A549 (cell line): ENCODE measurements at regions of chr7 and their contacts with region 1.

Region 1: GRCh38 chr7:104923010-104923421 is 91.0 kb upstream of the KMT2E start:
- DNase-seq: peak; percentile 45 to 85
- ATAC-seq: peak; percentile 86 to 94
- H3K4me3 ChIP-seq: no peak overlapping the region
- H3K27ac ChIP-seq: no peak overlapping the region
- H3K4me1 ChIP-seq: no peaks in the 10 kb centered on the region
- CTCF ChIP-seq: peak; percentile 70
- EP300 ChIP-seq: no peak
- POLR2A ChIP-seq: no peak
- RAD21 ChIP-seq: peak; percentile 84 to 94

Region 2: GRCh38 chr7:104895522-104896236 is 27.3 kb before region 1 on chr7:
- CTCF ChIA-PET with region 1: interaction called, 23 read pairs
- POLR2A ChIA-PET with region 1: no interaction called
- DNase-seq: no peak
- ATAC-seq: no peak
- H3K4me3 ChIP-seq: no peak overlapping the region
- H3K27ac ChIP-seq: no peak overlapping the region
- H3K4me1 ChIP-seq: no peaks in the 10 kb centered on the region
- CTCF ChIP-seq: no peak
- EP300 ChIP-seq: no peak
- POLR2A ChIP-seq: no peak
- RAD21 ChIP-seq: no peak

Region 3: GRCh38 chr7:104900525-104901239 is 22.3 kb before region 1 on chr7:
- CTCF ChIA-PET with region 1: interaction called, 23 read pairs
- POLR2A ChIA-PET with region 1: no interaction called
- DNase-seq: no peak
- ATAC-seq: no peak; a peak in 1 of 6 replicates
- H3K4me3 ChIP-seq: no peak overlapping the region
- H3K27ac ChIP-seq: no peak overlapping the region
- H3K4me1 ChIP-seq: no peaks in the 10 kb centered on the region
- CTCF ChIP-seq: no peak
- EP300 ChIP-seq: no peak
- POLR2A ChIP-seq: no peak
- RAD21 ChIP-seq: no peak

Region 4: DNA sequence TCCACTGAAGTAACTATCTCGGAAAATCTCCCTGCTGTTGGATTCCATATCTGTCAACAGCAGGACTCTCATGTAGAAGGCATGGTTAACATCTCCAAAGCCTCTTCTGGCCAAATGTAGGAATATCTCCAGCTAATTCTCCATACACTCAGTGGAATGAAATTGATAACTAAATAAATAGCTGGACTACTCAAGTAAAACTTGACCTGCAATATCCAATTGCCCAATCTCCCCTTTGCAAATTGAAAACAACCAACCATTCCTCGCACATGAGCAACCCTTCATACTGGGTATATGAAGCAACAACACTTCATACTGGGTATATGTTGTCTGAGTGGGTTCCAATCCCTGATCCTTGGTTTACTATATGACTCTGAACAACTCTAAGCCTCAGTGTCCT is 14.4 kb before region 1 on chr7:
- CTCF ChIA-PET with region 1: interaction called, 29 read pairs
- POLR2A ChIA-PET with region 1: no interaction called
- DNase-seq: no peak
- ATAC-seq: no peak
- H3K4me3 ChIP-seq: no peak overlapping the region
- H3K27ac ChIP-seq: no peak overlapping the region
- H3K4me1 ChIP-seq: no peaks in the 10 kb centered on the region
- CTCF ChIP-seq: no peak
- EP300 ChIP-seq: no peak
- POLR2A ChIP-seq: no peak
- RAD21 ChIP-seq: no peak

Region 5: DNA sequence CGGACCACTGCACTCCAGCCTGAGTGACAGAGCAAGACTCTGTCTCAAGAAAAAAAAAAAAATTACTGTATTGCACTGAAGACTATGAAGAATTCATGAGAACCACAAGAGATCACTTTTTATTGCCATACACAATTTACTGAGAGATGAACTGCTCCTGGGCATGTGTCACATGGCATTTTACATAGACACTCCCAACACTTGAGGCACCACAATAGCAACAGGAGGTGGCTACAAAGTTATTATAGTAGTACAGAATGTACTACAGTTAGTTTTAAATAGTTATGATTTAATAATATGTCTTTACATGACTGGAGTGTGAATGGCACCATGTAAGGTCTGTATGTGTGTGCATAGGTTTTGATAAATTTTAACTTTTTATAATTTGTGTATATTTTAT is 161.6 kb after region 1 on chr7:
- CTCF ChIA-PET with region 1: no interaction called
- POLR2A ChIA-PET with region 1: no interaction called
- DNase-seq: no peak
- ATAC-seq: no peak
- H3K4me3 ChIP-seq: no peak overlapping the region
- H3K27ac ChIP-seq: no peak overlapping the region
- H3K4me1 ChIP-seq: no peaks in the 10 kb centered on the region
- CTCF ChIP-seq: no peak
- EP300 ChIP-seq: no peak
- POLR2A ChIP-seq: no peak
- RAD21 ChIP-seq: no peak

Region 6: GRCh38 chr7:105336009-105336408 is 413.0 kb after region 1 on chr7:
- CTCF ChIA-PET with region 1: no interaction called
- POLR2A ChIA-PET with region 1: no interaction called
- DNase-seq: no peak
- ATAC-seq: no peak
- H3K4me3 ChIP-seq: no peak overlapping the region
- H3K27ac ChIP-seq: no peak overlapping the region
- H3K4me1 ChIP-seq: 0 out of 3 replicates have a peak, but pooled peaks cover 3% of the 10 kb centered on the region
- CTCF ChIP-seq: peak; percentile 41; the same call in 2 of the 3 replicates
- EP300 ChIP-seq: no peak
- POLR2A ChIP-seq: no peak
- RAD21 ChIP-seq: peak; percentile 53 to 68

Region 7: DNA sequence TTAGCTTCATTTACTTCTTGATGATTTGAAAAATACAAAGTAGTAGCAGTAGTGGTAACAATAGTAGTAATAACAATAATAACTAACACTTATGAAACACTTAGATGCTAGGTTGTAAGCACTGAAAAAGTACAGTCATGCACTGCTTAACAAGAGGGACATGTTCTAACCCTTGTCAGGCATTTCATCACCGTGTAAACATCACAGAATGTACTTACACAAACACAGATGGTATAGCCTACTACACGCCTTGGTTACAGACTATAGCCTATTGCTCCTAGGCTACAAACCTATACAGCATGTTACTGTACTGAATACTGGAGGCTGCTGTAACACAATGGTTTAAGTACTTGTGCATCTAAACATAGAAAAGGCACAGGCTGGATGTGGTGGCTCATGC is 538.5 kb after region 1 on chr7:
- CTCF ChIA-PET with region 1: no interaction called
- POLR2A ChIA-PET with region 1: interaction called, 15 read pairs
- DNase-seq: no peak
- ATAC-seq: no peak
- H3K4me3 ChIP-seq: no peak overlapping the region
- H3K27ac ChIP-seq: no peak overlapping the region
- H3K4me1 ChIP-seq: no peaks in the 10 kb centered on the region
- CTCF ChIP-seq: no peak
- EP300 ChIP-seq: no peak
- POLR2A ChIP-seq: no peak
- RAD21 ChIP-seq: no peak